ENCODE measurements at regions of chr11 and their contacts with region 1.

Region 1: GRCh38 chr11:304915-305843 is 2.4 kb upstream of the IFITM2 start:
- DNase-seq: peak; percentile 53
- ATAC-seq: no peak
- H3K4me3 ChIP-seq: no peak overlapping the region
- H3K27ac ChIP-seq: peak overlapping the region; percentile 90
- H3K4me1 ChIP-seq: peaks cover 50% of the 10 kb centered on the region
- H3K27me3 ChIP-seq: no peaks in the 10 kb centered on the region
- CTCF ChIP-seq: peak; percentile 91

Region 2: GRCh38 chr11:281126-281846 is 23.9 kb before region 1 on chr11:
- CTCF ChIA-PET with region 1: interaction called, 11 read pairs
- POLR2A ChIA-PET with region 1: no interaction called
- in situ Hi-C with region 1: no loop called
- intact Hi-C with region 1: no loop called
- DNase-seq: no peak
- ATAC-seq: no peak
- H3K4me3 ChIP-seq: no peak overlapping the region
- H3K27ac ChIP-seq: no peak overlapping the region
- H3K4me1 ChIP-seq: peaks cover 12% of the 10 kb centered on the region; the same call in 1 of the 2 replicates
- H3K27me3 ChIP-seq: peaks cover 3% of the 10 kb centered on the region
- CTCF ChIP-seq: no peak

Region 3: DNA sequence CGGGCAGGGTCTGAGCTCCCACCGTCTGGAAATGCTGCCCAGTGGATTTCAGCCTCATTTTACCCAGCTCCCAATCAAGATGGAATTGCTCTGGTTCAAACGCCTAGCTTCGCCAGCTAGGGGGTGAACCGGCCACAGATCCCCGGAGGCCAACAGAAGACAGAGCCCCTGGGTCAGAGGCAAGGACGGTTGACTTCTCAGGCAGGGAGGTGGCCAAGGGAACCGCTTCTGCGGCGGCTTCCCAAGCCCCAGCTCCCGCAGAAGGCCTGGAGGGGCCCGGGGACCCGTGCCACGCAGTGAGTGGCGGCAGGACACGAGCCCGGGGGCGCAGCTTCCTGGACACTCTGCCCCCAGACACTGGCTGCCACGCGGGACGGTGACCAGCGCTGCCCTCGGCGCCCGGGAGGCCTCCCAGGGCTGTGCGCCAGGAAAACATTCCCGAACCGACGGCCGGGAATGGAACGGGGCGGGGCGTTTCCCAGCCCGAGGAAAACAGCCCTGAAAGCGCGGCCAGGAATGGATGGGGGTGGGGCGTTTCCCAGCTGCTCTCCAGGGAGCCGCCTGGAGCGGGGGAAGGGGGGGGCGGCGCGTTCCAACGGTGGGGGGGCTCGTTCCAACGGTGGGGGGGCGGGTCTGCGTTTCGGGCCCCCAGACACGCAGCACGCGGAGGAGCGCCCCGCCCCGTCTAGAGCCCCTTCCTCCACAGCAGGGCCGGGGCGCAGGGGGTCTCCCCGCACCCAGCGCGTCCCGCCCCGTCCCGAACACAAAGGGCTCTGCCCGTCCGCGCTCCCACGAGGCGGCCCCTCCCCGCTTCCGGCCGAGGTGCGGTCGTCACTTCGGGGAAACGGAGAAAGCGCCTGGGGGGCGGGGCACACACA is 50.6 kb after region 1 on chr11:
- CTCF ChIA-PET with region 1: interaction called, 3 read pairs
- POLR2A ChIA-PET with region 1: interaction called, 5 read pairs
- in situ Hi-C with region 1: no loop called
- intact Hi-C with region 1: loop called (anchors 5 kb)
- DNase-seq: peak; percentile 51
- ATAC-seq: peak; percentile 91
- H3K4me3 ChIP-seq: peak overlapping the region; percentile 24 to 42
- H3K27ac ChIP-seq: peak overlapping the region; percentile 99
- H3K4me1 ChIP-seq: peaks cover 35% of the 10 kb centered on the region
- H3K27me3 ChIP-seq: no peaks in the 10 kb centered on the region
- CTCF ChIP-seq: no peak

Region 4: DNA sequence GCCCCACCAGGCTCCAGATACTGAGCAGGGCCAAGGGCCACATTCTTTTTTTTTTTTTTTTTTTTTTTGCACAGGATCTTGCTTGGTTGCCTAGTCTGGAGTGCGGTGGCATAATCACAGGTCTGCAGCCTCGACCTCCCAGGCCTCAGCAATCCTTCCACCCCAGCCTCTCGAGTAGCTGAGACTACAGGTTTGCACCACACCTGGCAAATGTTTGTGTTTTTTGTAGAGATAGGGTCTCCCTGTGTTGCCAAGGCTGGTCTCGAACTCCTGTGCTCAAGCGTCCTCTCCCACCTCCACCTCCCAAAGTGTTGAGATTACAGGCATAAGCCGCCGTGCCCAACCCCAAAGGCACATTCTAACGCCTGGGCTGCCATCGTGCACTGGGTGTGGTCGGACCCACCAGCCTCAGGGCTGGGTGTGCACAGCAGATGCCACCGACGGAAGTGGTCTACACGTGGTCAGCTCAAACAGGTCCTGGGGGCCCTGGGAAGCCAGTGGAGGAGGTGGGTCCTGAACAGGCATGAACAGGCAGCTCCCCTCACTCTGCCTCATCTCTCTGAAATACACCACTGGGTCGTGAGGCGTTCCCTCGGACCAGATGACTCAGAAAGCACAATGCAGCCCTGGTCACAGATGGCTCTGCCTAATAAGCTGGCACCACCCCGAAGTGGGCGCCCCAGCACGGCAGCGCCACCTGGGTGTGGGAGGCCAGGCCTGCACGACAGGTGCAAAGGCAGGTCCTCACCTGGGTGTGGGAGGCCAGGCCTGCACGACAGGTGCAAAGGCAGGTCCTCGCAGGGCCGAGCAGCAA is 59.0 kb after region 1 on chr11:
- CTCF ChIA-PET with region 1: interaction called, 14 read pairs
- POLR2A ChIA-PET with region 1: no interaction called
- in situ Hi-C with region 1: no loop called
- intact Hi-C with region 1: loop called (anchors 5 kb)
- DNase-seq: peak; percentile 38
- ATAC-seq: peak; percentile 62
- H3K4me3 ChIP-seq: no peak overlapping the region
- H3K27ac ChIP-seq: no peak overlapping the region
- H3K4me1 ChIP-seq: peaks cover 9% of the 10 kb centered on the region
- H3K27me3 ChIP-seq: no peaks in the 10 kb centered on the region
- CTCF ChIP-seq: peak; percentile 94

Region 5: DNA sequence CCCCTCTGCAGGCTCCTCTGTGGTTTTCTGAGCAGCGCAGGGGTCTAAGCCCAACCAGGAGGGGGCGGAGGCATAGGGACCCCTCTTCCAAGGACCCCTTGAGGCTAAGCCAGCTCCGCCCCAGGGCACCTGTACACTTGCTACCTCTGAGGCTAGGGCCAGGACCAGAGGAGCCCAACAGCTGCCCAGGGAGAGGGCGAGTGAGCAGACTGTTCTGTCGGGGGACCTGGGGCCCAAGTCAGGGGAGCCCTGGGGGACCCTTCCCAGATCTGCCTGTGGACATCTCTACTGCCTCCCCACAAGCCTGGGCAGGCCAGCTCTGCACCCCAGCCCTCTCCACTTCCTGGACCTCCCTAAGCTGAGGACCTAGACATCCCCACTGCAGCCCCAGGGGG is 65.9 kb after region 1 on chr11:
- CTCF ChIA-PET with region 1: interaction called, 14 read pairs
- POLR2A ChIA-PET with region 1: interaction called, 17 read pairs
- in situ Hi-C with region 1: no loop called
- intact Hi-C with region 1: no loop called
- DNase-seq: no peak
- ATAC-seq: no peak; the same call in 1 of the 2 replicates
- H3K4me3 ChIP-seq: peak overlapping the region in 1 of 2 experiments; percentile 72; a peak in 2 of 4 replicates
- H3K27ac ChIP-seq: peak overlapping the region; percentile 35; the same call in 1 of the 2 replicates
- H3K4me1 ChIP-seq: peaks cover 27% of the 10 kb centered on the region
- H3K27me3 ChIP-seq: no peaks in the 10 kb centered on the region
- CTCF ChIP-seq: no peak